ENCODE measurements at regions of chr5 and their contacts with region 1.

Region 1: GRCh38 chr5:61331407-61332357 is at the start of gene ZSWIM6:
- DNase-seq: peak; percentile 99 to 100
- ATAC-seq: peak; percentile 91 to 99 (median 96)
- H3K4me3 ChIP-seq: peak within 1 kb of the TSS; percentile 80 to 99 (median 90)
- H3K27ac ChIP-seq: peak within 1 kb of the TSS; percentile 81 to 99 (median 94)
- H3K4me1 ChIP-seq: peaks cover 5 to 54% (median 31%) of the 10 kb centered on the region in 9 donors
- H3K27me3 ChIP-seq: peaks cover 0 to 3% (median 0%) of the 10 kb centered on the region in 7 donors
- CTCF ChIP-seq: peak in 1 of 9 donors; percentile 13
- total RNA-seq, gene ZSWIM6: 5.9 to 10.3 (median 7.2) TPM

Region 2: GRCh38 chr5:60960591-60960990 is 371.1 kb before region 1 on chr5:
- intact Hi-C with region 1: loop called in 1 of 10 experiments (anchors 10 kb)
- DNase-seq: no peak
- ATAC-seq: no peak
- H3K4me3 ChIP-seq: no peak overlapping the region
- H3K27ac ChIP-seq: no peak overlapping the region
- H3K4me1 ChIP-seq: peaks cover 0 to 16% (median 5%) of the 10 kb centered on the region in 9 donors
- H3K27me3 ChIP-seq: no peaks in the 10 kb centered on the region
- CTCF ChIP-seq: peak in 7 of 9 donors; percentile 37 to 58 (median 43)

Region 3: DNA sequence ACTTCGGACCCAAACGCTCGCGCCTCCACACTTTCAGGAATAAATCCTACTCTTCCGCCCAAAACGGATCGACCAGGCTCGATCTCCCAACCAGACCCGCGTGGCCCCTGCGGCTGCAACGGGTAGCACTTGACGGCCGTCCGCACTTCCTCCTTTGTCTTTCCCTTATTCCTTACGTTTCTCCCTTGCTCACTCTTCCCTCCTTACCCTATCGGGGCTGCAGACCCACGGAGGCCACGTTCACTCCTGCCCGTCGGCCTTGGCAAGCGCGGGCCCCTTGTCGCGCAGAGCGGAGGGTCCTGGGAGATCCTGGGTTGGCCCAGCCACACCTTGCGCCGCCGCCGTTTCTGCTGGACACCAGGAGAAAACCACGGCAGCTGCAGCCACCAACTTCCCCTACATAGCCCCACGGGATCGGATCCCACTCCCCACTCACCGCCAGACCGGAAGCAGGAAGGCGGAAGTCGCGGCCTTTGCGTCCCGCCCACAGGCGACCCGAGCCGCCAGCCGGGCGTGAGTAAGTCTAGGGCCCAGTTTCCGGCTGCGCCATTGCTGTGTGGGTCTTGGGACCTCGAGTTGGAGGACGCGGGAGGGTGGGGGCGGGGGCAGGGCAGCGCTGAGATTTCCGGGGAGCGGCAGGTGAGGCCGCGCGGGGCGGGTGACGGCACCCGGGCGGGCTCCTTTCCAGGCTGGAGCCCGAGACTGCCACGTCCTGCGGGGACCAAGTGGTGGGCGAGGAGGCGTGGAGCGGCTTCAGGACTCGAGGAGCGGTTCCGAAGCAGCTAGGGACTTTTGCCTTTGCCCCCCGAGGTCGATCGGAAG is 169.5 kb before region 1 on chr5 and contains the start of gene SMIM15:
- intact Hi-C with region 1: loop called (anchors 2 to 10 kb)
- DNase-seq: peak; percentile 89 to 90
- ATAC-seq: peak; percentile 98 to 99 (median 99)
- H3K4me3 ChIP-seq: peak within 1 kb of the TSS; percentile 65 to 99 (median 92)
- H3K27ac ChIP-seq: peak within 1 kb of the TSS; percentile 80 to 97 (median 94)
- H3K4me1 ChIP-seq: peaks cover 0 to 46% (median 22%) of the 10 kb centered on the region in 9 donors
- H3K27me3 ChIP-seq: no peaks in the 10 kb centered on the region
- CTCF ChIP-seq: no peak
- total RNA-seq, gene SMIM15: 18.8 to 26.1 (median 22.6) TPM

Region 4: GRCh38 chr5:61386045-61386800 is 54.5 kb after region 1 on chr5:
- intact Hi-C with region 1: no loop called
- DNase-seq: no peak
- ATAC-seq: no peak
- H3K4me3 ChIP-seq: no peak overlapping the region
- H3K27ac ChIP-seq: no peak overlapping the region
- H3K4me1 ChIP-seq: peaks cover 0 to 21% (median 11%) of the 10 kb centered on the region in 9 donors
- H3K27me3 ChIP-seq: no peaks in the 10 kb centered on the region
- CTCF ChIP-seq: no peak

Region 5: DNA sequence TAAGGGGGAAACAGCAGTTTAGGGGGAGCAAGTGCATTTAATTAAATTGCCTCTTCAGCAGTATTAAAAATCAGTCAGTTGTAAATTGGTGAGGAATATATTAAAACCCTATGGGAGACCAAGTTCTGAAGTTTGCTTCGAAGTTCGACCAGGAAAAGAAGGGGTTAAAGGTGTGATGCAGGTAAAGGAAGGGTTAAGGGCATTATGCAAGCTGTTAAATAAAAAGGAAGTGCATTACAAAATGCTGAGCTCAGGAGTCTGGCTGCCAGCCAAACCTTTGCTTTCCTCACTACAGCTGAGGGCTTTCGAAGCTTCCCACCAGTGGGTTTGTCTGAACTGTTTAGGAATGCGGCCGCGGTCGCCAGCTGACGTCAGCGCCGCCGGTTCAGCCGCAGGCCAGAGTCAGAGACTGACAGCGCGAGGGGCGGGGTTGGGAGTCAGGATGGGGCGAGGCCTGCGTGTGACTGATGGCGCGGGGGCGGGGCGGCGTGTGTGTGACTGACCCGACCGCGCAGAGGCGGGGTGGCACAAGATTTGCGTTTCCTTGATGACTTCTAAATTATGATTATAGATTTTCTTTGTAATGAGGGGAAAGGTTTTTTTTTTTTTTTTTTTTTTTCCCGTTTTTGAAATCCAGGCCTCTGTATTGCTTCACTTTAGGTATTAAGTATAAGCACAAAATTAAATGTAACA is 76.9 kb after region 1 on chr5:
- intact Hi-C with region 1: loop called in 7 of 10 experiments (anchors 2 to 10 kb)
- DNase-seq: peak; percentile 99
- ATAC-seq: peak; percentile 100
- H3K4me3 ChIP-seq: peak overlapping the region in 8 of 10 donors; percentile 2 to 38 (median 32)
- H3K27ac ChIP-seq: peak overlapping the region in 6 of 10 donors; percentile 8 to 67 (median 41)
- H3K4me1 ChIP-seq: peaks cover 0 to 27% (median 20%) of the 10 kb centered on the region in 9 donors
- H3K27me3 ChIP-seq: no peaks in the 10 kb centered on the region
- CTCF ChIP-seq: peak in 3 of 9 donors; percentile 11 to 30 (median 29)

Region 6: DNA sequence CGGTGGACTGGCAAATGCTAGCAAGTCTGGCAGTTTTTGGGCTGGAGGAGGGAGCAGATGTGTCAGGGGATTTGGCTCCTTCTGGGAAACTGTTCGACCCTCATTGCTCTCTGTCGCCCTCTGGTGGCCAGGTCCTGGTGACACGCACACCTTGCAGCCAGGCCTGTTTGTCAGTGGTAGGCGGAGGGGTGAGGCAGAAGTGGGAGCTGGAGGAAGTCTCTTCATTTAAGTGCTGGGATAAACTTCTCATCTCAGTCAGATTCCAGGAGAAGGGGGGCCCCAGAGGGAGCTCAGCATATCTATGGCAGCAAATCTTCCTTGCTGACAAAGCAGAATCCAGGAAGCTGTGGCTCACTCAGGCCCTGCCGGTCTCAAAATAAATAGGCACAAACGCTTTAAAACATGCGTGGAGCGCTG is 326.9 kb after region 1 on chr5:
- intact Hi-C with region 1: loop called in 9 of 10 experiments (anchors 2 to 10 kb)
- DNase-seq: peak; percentile 88
- ATAC-seq: peak; percentile 82 to 95 (median 92)
- H3K4me3 ChIP-seq: peak overlapping the region in 6 of 10 donors; percentile 1 to 35 (median 27)
- H3K27ac ChIP-seq: peak overlapping the region in 6 of 10 donors; percentile 25 to 62 (median 40)
- H3K4me1 ChIP-seq: peaks cover 0 to 8% (median 0%) of the 10 kb centered on the region in 9 donors
- H3K27me3 ChIP-seq: no peaks in the 10 kb centered on the region
- CTCF ChIP-seq: peak; percentile 88 to 97 (median 93)